A549 (cell line): ENCODE measurements at regions of chr2 and their contacts with region 1.

Region 1: GRCh38 chr2:197453161-197453914 is at the start of gene COQ10B:
- DNase-seq: peak; percentile 93 to 100
- ATAC-seq: peak; percentile 95 to 96
- H3K4me3 ChIP-seq: peak within 1 kb of the TSS; percentile 83
- H3K27ac ChIP-seq: peak within 1 kb of the TSS; percentile 97
- H3K4me1 ChIP-seq: peaks cover 17% of the 10 kb centered on the region; the same call in 2 of the 3 replicates
- CTCF ChIP-seq: no peak
- EP300 ChIP-seq: no peak
- POLR2A ChIP-seq: peak; percentile 73
- RAD21 ChIP-seq: no peak; a peak in 1 of 5 replicates
- polyA plus RNA-seq, gene COQ10B: 6.1 and 11.2 TPM in 2 replicates

Region 2: DNA sequence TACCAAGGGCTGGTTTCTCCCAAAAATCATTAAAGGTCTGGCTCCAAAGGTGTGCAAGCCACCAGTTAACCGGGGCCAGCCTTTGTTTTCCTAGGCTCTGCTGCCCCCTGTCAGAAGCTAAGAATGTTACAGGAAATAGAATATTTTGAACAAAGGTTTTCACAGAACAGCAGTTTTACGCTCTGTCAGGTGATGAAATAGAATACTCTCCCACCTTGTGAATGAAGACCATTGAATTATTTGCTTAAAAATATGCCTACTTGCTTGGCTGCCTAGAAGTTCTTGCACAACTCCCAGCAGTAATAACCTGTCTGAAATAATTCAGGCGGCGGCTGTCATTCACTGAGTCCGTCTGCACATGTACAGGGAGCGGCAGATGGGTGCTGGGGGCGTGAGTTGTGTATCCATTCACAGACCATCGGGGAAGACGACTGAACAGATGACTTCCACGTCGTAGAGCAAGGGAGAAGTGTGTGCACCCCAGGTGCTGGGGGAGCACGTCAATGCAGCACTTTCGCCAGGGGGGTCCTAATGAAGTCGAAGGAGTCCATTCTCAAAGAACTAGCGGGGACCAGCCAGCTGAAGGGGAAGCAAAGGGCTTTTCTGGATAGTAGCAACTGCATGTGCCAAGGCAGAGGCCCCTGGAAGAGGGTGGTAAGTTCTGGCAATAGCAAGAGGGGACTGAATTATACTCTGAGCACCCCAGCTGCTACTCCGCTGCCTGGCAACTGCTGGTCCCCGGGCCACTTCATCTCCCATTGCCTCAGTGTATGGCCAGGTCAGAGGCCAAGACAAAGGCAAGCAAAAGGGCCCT is 74.6 kb before region 1 on chr2:
- CTCF ChIA-PET with region 1: no interaction called
- POLR2A ChIA-PET with region 1: no interaction called
- DNase-seq: peak; percentile 44 to 52
- ATAC-seq: peak; percentile 81 to 86
- H3K4me3 ChIP-seq: peak overlapping the region; percentile 24; the same call in 1 of the 3 replicates
- H3K27ac ChIP-seq: no peak overlapping the region
- H3K4me1 ChIP-seq: no peaks in the 10 kb centered on the region
- CTCF ChIP-seq: peak; percentile 93
- EP300 ChIP-seq: no peak
- POLR2A ChIP-seq: no peak
- RAD21 ChIP-seq: peak; percentile 96 to 97

Region 3: GRCh38 chr2:197434541-197435513 is 18.5 kb before region 1 on chr2 and contains the start of gene SF3B1:
- CTCF ChIA-PET with region 1: interaction called, 4 read pairs
- POLR2A ChIA-PET with region 1: interaction called, 50 read pairs
- DNase-seq: peak; percentile 89 to 98
- ATAC-seq: peak; percentile 93 to 96
- H3K4me3 ChIP-seq: peak within 1 kb of the TSS; percentile 90
- H3K27ac ChIP-seq: peak within 1 kb of the TSS; percentile 92 to 93
- H3K4me1 ChIP-seq: peaks cover 28% of the 10 kb centered on the region; the same call in 2 of the 3 replicates
- CTCF ChIP-seq: no peak
- EP300 ChIP-seq: no peak
- POLR2A ChIP-seq: peak; percentile 87
- RAD21 ChIP-seq: no peak
- polyA plus RNA-seq, gene SF3B1: 400 and 436 TPM in 2 replicates

Region 4: GRCh38 chr2:197515739-197516392 is 62.5 kb after region 1 on chr2 and contains the start of gene MOB4:
- CTCF ChIA-PET with region 1: interaction called, 3 read pairs
- POLR2A ChIA-PET with region 1: interaction called, 12 read pairs
- DNase-seq: peak; percentile 73 to 96
- ATAC-seq: peak; percentile 97 to 98
- H3K4me3 ChIP-seq: peak within 1 kb of the TSS; percentile 80
- H3K27ac ChIP-seq: peak within 1 kb of the TSS; percentile 94 to 98
- H3K4me1 ChIP-seq: peaks cover 13% of the 10 kb centered on the region
- CTCF ChIP-seq: no peak
- EP300 ChIP-seq: no peak
- POLR2A ChIP-seq: peak; percentile 87
- RAD21 ChIP-seq: no peak; a peak in 1 of 5 replicates
- polyA plus RNA-seq, gene MOB4: 44.2 and 74.7 TPM in 2 replicates